ENCODE measurements at regions of chr6 and their contacts with region 1.

Region 1: DNA sequence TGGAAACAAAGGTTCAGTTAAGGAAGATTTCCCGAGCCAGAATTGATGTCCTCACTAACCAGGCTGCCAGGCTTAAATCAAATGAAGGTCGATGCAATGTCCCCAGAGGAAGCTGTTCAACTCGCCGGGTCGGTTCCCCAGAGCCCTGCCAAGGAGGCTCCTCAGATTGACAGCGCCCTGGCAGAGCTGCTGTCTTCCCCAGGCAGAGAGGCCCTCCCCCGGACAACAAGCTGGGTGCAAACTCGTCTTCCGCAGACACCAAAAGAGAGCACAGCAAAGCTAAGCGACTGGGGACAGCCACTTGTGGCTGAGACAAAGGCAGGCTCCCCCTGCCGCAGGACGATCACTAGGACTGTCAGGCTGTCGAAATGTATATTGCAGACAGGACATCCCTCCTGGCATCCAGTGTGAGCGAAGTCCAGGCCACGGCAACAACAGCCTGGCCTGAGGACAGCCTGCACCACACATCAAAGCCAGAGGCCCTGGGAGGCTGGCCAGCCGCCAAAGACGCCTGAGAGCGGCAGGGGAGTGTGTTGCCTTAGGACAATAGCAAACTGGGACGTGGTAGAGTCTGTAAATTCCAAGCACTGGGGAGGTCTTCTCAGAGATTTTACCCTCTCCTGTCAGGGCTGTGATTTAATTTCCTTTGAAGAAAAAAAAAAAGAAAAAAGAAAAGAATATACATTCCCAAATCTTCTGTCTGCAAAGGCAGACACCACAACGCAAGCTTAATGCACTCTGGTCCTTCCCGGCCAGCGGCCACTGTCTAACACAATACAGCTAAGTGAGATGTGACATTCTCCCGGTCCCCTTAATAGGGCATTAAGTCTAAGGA is 99.1 kb downstream of the HIVEP2 start:
- DNase-seq: peak; percentile 48 to 84 (median 66)
- ATAC-seq: peak; percentile 50
- H3K4me3 ChIP-seq: peak overlapping the region; percentile 53
- H3K4me3 Mint-ChIP-seq: peak overlapping the region; percentile 85
- H3K27ac ChIP-seq: peak overlapping the region; percentile 88 to 93
- H3K27ac Mint-ChIP-seq: peak overlapping the region; percentile 94
- H3K4me1 ChIP-seq: peaks cover 49% of the 10 kb centered on the region
- H3K4me1 Mint-ChIP-seq: peaks cover 97% of the 10 kb centered on the region
- H3K27me3 ChIP-seq: no peaks in the 10 kb centered on the region
- H3K27me3 Mint-ChIP-seq: no peaks in the 10 kb centered on the region
- CTCF ChIP-seq: no peak

Region 2: GRCh38 chr6:142356201-142356883 is 489.5 kb before region 1 on chr6:
- CTCF ChIA-PET with region 1: no interaction called
- POLR2A ChIA-PET with region 1: no interaction called
- intact Hi-C with region 1: no loop called
- DNase-seq: no peak
- ATAC-seq: peak; percentile 14
- H3K4me3 ChIP-seq: no peak overlapping the region
- H3K4me3 Mint-ChIP-seq: no peak overlapping the region
- H3K27ac ChIP-seq: no peak overlapping the region
- H3K27ac Mint-ChIP-seq: peak overlapping the region; percentile 3
- H3K4me1 ChIP-seq: no peaks in the 10 kb centered on the region
- H3K4me1 Mint-ChIP-seq: peaks cover 15% of the 10 kb centered on the region
- H3K27me3 ChIP-seq: no peaks in the 10 kb centered on the region
- H3K27me3 Mint-ChIP-seq: no peaks in the 10 kb centered on the region
- CTCF ChIP-seq: no peak

Region 3: DNA sequence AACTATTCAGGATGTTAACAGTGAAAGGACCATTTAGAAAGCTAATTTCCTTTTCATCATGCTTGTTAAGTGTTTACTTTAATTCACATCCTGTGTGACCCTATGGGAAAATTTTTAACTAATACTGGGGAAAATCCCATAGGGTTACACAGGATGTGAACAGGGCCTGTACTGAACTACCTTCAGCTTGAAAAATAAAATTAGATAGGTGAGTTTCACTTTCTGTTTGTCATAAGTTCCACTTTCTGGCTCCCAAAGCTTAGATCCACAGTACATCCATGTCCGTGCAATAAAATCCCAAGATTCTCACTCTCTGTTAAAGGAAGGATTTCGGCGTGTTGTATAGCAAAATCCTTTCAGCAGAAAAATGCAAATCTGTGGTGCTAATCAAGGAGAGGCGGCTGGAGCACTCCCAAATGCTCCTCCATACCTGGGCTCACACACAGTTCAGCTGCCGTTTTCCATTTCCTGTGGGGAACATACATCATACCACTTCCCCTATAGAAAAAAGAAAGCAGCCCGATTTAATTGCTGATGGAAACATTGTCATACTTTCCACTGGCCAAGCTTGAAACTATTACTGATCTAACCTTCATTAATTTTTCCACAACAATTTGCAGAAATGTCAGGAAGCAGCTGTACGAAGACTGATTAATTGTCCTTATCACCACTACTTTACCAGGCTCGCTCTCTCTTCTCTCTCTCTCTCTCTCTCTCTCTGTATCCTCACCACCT is 26.1 kb before region 1 on chr6:
- CTCF ChIA-PET with region 1: no interaction called
- POLR2A ChIA-PET with region 1: interaction called, 45 read pairs
- intact Hi-C with region 1: loop called in 1 of 2 experiments (anchors 2 kb)
- DNase-seq: peak in 5 of 14 experiments; percentile 13 to 84 (median 75)
- ATAC-seq: peak; percentile 51
- H3K4me3 ChIP-seq: peak overlapping the region; percentile 45
- H3K4me3 Mint-ChIP-seq: peak overlapping the region; percentile 84
- H3K27ac ChIP-seq: peak overlapping the region; percentile 75 to 84
- H3K27ac Mint-ChIP-seq: peak overlapping the region; percentile 82
- H3K4me1 ChIP-seq: peaks cover 52% of the 10 kb centered on the region
- H3K4me1 Mint-ChIP-seq: peaks cover 82% of the 10 kb centered on the region
- H3K27me3 ChIP-seq: no peaks in the 10 kb centered on the region
- H3K27me3 Mint-ChIP-seq: no peaks in the 10 kb centered on the region
- CTCF ChIP-seq: no peak

Region 4: DNA sequence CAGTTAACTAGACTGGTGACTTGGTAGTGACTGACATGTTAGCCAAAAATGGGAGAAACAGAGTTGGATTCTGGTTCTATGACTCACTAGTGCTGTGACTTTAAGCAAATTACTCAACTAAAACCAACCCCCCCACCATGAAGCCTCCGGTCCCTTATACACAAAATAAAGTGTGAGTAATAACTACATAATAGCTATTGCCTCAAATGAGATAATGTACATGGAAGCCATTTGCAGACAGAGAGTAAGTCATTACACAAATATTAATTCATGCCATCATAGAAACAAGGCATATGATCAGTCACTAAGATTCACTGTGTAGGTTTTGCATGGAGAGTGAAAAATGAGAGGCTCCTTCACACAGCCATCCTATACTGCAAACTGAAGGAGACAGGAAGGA is 12.8 kb before region 1 on chr6:
- CTCF ChIA-PET with region 1: interaction called, 4 read pairs
- POLR2A ChIA-PET with region 1: interaction called, 15 read pairs
- intact Hi-C with region 1: no loop called
- DNase-seq: peak in 2 of 14 experiments; percentile 39 to 54
- ATAC-seq: peak; percentile 37
- H3K4me3 ChIP-seq: no peak overlapping the region
- H3K4me3 Mint-ChIP-seq: no peak overlapping the region
- H3K27ac ChIP-seq: no peak overlapping the region
- H3K27ac Mint-ChIP-seq: peak overlapping the region; percentile 31
- H3K4me1 ChIP-seq: peaks cover 12% of the 10 kb centered on the region
- H3K4me1 Mint-ChIP-seq: peaks cover 89% of the 10 kb centered on the region
- H3K27me3 ChIP-seq: no peaks in the 10 kb centered on the region
- H3K27me3 Mint-ChIP-seq: no peaks in the 10 kb centered on the region
- CTCF ChIP-seq: no peak

Region 5: GRCh38 chr6:142871910-142872331 is 26.1 kb after region 1 on chr6:
- CTCF ChIA-PET with region 1: interaction called, 5 read pairs
- POLR2A ChIA-PET with region 1: interaction called, 12 read pairs
- intact Hi-C with region 1: no loop called
- DNase-seq: peak in 9 of 14 experiments; percentile 21 to 91 (median 54)
- ATAC-seq: peak; percentile 89
- H3K4me3 ChIP-seq: no peak overlapping the region
- H3K4me3 Mint-ChIP-seq: peak overlapping the region; percentile 4
- H3K27ac ChIP-seq: peak overlapping the region; percentile 22 to 56
- H3K27ac Mint-ChIP-seq: peak overlapping the region; percentile 91
- H3K4me1 ChIP-seq: peaks cover 50% of the 10 kb centered on the region
- H3K4me1 Mint-ChIP-seq: peaks cover 94% of the 10 kb centered on the region
- H3K27me3 ChIP-seq: no peaks in the 10 kb centered on the region
- H3K27me3 Mint-ChIP-seq: no peaks in the 10 kb centered on the region
- CTCF ChIP-seq: no peak

Region 6: GRCh38 chr6:142902636-142903053 is 56.8 kb after region 1 on chr6:
- CTCF ChIA-PET with region 1: interaction called, 5 read pairs
- POLR2A ChIA-PET with region 1: interaction called, 19 read pairs
- intact Hi-C with region 1: loop called in 1 of 2 experiments (anchors 2 kb)
- DNase-seq: peak; percentile 55 to 95 (median 70)
- ATAC-seq: peak; percentile 57
- H3K4me3 ChIP-seq: peak overlapping the region; percentile 62
- H3K4me3 Mint-ChIP-seq: peak overlapping the region; percentile 81
- H3K27ac ChIP-seq: peak overlapping the region; percentile 86 to 93
- H3K27ac Mint-ChIP-seq: no peak overlapping the region
- H3K4me1 ChIP-seq: peaks cover 40% of the 10 kb centered on the region
- H3K4me1 Mint-ChIP-seq: peaks cover 26% of the 10 kb centered on the region
- H3K27me3 ChIP-seq: no peaks in the 10 kb centered on the region
- H3K27me3 Mint-ChIP-seq: no peaks in the 10 kb centered on the region
- CTCF ChIP-seq: no peak

Region 7: GRCh38 chr6:143260857-143261256 is 415.0 kb after region 1 on chr6:
- CTCF ChIA-PET with region 1: no interaction called
- POLR2A ChIA-PET with region 1: no interaction called
- intact Hi-C with region 1: no loop called
- DNase-seq: no peak
- ATAC-seq: no peak
- H3K4me3 ChIP-seq: no peak overlapping the region
- H3K4me3 Mint-ChIP-seq: no peak overlapping the region
- H3K27ac ChIP-seq: no peak overlapping the region
- H3K27ac Mint-ChIP-seq: no peak overlapping the region
- H3K4me1 ChIP-seq: no peaks in the 10 kb centered on the region
- H3K4me1 Mint-ChIP-seq: no peaks in the 10 kb centered on the region
- H3K27me3 ChIP-seq: no peaks in the 10 kb centered on the region
- H3K27me3 Mint-ChIP-seq: no peaks in the 10 kb centered on the region
- CTCF ChIP-seq: no peak